ENCODE measurements at regions of chr17 and their contacts with region 1.

Region 1: GRCh38 chr17:35063514-35064223 is at the start of gene RFFL:
- DNase-seq: peak; percentile 88
- H3K4me3 Mint-ChIP-seq: peak within 1 kb of the TSS; percentile 49
- H3K27ac Mint-ChIP-seq: peak within 1 kb of the TSS; percentile 87
- H3K4me1 Mint-ChIP-seq: peaks cover 66% of the 10 kb centered on the region
- H3K27me3 Mint-ChIP-seq: no peaks in the 10 kb centered on the region
- total RNA-seq, gene RFFL: 28.1 and 28.2 TPM in 2 replicates

Region 2: GRCh38 chr17:34378664-34379101 is 685.0 kb before region 1 on chr17:
- intact Hi-C with region 1: loop called (anchors 2 kb)
- DNase-seq: peak; percentile 32
- H3K4me3 Mint-ChIP-seq: peak overlapping the region; percentile 62
- H3K27ac Mint-ChIP-seq: peak overlapping the region; percentile 77
- H3K4me1 Mint-ChIP-seq: peaks cover 75% of the 10 kb centered on the region
- H3K27me3 Mint-ChIP-seq: peaks cover 12% of the 10 kb centered on the region

Region 3: GRCh38 chr17:35022536-35023063 is 41.1 kb before region 1 on chr17:
- intact Hi-C with region 1: loop called (anchors 1 kb)
- DNase-seq: peak; percentile 67
- H3K4me3 Mint-ChIP-seq: peak overlapping the region; percentile 79
- H3K27ac Mint-ChIP-seq: peak overlapping the region; percentile 99
- H3K4me1 Mint-ChIP-seq: peaks cover 70% of the 10 kb centered on the region
- H3K27me3 Mint-ChIP-seq: no peaks in the 10 kb centered on the region

Region 4: DNA sequence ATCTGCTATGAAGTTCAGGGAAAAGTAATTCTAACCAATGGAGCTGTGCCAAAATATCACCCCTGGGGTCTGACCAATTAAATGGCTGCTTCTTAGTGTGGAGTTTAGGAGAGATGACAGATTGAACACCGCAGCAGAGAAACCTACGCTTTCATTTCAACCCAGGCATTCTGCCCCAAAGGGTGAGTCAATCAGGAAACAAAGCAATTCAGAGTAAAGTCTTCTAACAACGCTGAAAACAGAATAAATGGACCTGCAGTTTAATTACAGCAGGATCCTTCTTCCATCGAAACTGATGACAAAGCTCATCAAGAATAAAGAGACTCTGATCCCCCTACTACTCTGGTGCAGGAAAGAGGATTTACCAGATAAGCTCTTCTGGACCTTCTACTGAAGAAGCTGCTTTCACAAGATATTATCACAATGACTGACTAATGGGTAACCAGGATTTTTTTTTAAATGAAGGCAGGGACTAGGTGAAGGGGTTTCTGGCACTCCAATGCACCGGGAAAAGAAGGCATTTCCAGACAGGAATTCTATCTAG is 16.9 kb before region 1 on chr17:
- intact Hi-C with region 1: loop called (anchors 1 kb)
- DNase-seq: peak; percentile 65
- H3K4me3 Mint-ChIP-seq: peak overlapping the region; percentile 66
- H3K27ac Mint-ChIP-seq: peak overlapping the region; percentile 97
- H3K4me1 Mint-ChIP-seq: peaks cover 49% of the 10 kb centered on the region
- H3K27me3 Mint-ChIP-seq: no peaks in the 10 kb centered on the region

Region 5: DNA sequence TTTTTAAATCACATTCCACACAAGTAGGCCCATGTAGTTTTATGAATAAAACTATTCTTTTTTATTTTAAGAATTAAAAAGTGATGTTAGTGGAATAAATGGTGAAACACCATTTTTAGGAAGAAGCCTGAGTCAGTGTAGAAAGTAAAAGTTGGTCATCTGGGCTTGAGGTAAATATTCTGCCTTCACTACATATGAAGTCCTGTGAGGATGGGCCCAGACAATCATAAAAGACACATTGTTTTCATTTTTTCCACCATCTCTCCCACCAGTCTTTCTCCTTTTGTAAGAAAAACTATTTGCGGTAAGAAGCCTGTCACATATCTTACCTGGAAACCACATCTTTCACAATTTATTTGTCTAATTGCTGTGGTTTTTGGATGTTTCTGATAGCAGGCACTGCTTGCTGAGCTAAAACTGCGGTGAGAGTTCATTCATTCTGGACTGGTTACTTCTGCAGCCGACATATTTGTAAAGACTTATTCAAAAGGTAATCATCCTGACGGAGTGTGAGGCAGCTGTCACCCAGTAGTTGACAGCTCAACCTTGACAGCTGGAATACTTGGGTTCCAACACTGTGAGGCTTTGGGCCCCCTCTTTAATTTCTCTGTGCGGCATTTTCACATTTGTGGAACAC is 10.4 kb after region 1 on chr17:
- intact Hi-C with region 1: loop called (anchors 1 kb)
- DNase-seq: no peak
- H3K4me3 Mint-ChIP-seq: peak overlapping the region; percentile 57
- H3K27ac Mint-ChIP-seq: peak overlapping the region; percentile 77
- H3K4me1 Mint-ChIP-seq: peaks cover 59% of the 10 kb centered on the region
- H3K27me3 Mint-ChIP-seq: no peaks in the 10 kb centered on the region

Measured in activated T-helper 1 cell treated with anti-CD3 and anti-CD28 coated beads, Interleukin-12 subunit alpha, Interleukin-12 subunit beta, Interleukin-2, Interleukin-4 antibody, amounts not matched to agents 30 ng/mL and 10 ng/mL and 1 ng/mL, durations not matched to agents 14 hours and 24 hours and 36 hours (primary cell).